K562 (cell line): ENCODE measurements at regions of chr6 and their contacts with region 1.

Region 1: DNA sequence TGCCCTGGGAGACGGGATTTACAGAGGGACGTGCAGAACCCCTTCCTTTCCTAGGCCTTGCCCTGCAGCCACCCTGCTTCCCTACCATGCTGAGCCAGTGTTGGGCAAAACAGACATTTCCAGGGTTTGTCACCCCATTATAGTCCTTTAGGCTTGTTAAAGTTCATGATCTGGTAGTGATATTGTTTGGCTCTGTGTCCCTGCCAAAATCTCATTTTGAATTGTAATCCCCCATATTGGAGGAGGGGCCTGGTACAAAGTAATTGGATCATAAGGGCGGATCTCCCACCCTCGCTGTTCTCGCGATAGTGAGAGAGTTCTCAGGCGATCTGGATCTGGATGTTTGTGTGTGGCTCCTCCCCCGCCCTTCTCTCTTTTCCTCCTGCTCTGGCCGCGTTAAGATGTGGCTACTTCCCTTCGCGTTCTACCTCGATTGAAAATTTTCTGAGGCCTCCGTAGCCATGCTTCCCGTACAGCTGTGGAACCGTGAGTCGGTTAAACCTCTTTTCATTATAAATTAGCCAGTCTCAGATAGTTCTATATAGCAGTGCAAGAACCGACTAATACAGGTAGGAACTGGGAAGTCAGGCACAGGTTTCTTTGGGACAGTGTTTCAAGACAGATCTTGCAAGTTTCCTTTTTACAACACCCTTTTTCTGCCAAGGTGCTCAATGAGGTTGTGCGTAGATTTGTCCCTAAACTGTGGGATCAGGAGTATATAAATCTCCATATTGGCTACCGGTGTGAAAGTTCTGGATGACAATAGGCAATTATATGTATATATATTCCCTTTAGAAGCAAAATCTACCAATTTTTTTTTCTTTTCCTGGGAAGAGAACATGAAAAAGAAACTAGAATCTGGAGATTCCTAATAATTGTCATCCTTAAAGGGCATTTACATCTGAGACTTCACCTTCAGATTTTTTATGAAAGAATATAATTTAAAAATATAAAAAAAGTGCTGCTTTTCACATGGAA is 152.1 kb downstream of the SAMD5 start:
- DNase-seq: peak; percentile 86 to 95 (median 88)
- ATAC-seq: peak; percentile 99
- H3K4me3 ChIP-seq: peak overlapping the region; percentile 63
- H3K27ac ChIP-seq: peak overlapping the region; percentile 80
- H3K4me1 ChIP-seq: peaks cover 4 to 11% of the 10 kb centered on the region in 2 experiments; a peak in 4 of 5 replicates
- H3K27me3 ChIP-seq: no peaks in the 10 kb centered on the region
- CTCF ChIP-seq: peak in 1 of 3 experiments; percentile 22; a peak in 1 of 6 replicates
- EP300 ChIP-seq: no peak
- POLR2A ChIP-seq: peak; percentile 93
- RAD21 ChIP-seq: peak in 1 of 2 experiments; percentile 14; a peak in 1 of 4 replicates

Region 2: DNA sequence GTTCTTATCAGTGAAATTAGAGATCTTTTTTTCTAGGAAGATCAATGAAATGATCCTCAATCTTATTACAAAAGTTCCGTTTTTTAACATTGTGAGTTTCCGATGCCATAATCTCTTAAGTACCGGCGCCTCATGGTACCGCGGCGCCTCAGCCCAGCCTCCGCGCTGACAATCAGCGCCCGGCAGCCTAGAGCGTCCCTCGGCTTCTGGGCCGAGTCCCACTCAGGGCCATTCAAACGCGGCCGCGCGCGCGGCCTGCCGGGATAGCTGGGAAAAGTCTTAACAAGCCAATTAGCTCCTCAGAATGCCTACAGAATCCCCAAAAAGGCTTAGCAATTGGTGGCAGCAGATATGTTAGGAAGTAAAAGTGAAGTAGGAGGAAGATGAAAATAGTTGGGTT is 857.0 kb before region 1 on chr6:
- CTCF ChIA-PET with region 1: no interaction called
- POLR2A ChIA-PET with region 1: no interaction called
- in situ Hi-C with region 1: no loop called
- intact Hi-C with region 1: no loop called
- DNase-seq: peak in 2 of 4 experiments; percentile 57 to 81
- ATAC-seq: peak; percentile 98
- H3K4me3 ChIP-seq: peak overlapping the region; percentile 3; the same call in 1 of the 2 replicates
- H3K27ac ChIP-seq: peak overlapping the region; percentile 62; the same call in 2 of the 3 replicates
- H3K4me1 ChIP-seq: peaks cover 0 to 3% of the 10 kb centered on the region in 2 experiments; a peak in 2 of 5 replicates
- H3K27me3 ChIP-seq: no peaks in the 10 kb centered on the region
- CTCF ChIP-seq: no peak
- EP300 ChIP-seq: no peak
- POLR2A ChIP-seq: peak; percentile 67
- RAD21 ChIP-seq: no peak

Region 3: GRCh38 chr6:147709396-147710272 is 49.0 kb after region 1 on chr6:
- CTCF ChIA-PET with region 1: no interaction called
- POLR2A ChIA-PET with region 1: no interaction called
- in situ Hi-C with region 1: no loop called
- intact Hi-C with region 1: loop called (anchors 5 kb)
- DNase-seq: peak; percentile 45 to 85 (median 62)
- ATAC-seq: peak; percentile 89
- H3K4me3 ChIP-seq: no peak overlapping the region
- H3K27ac ChIP-seq: peak overlapping the region; percentile 59; the same call in 2 of the 3 replicates
- H3K4me1 ChIP-seq: peaks cover 7 to 45% of the 10 kb centered on the region in 2 experiments; a peak in 3 of 5 replicates
- H3K27me3 ChIP-seq: no peaks in the 10 kb centered on the region
- CTCF ChIP-seq: no peak
- EP300 ChIP-seq: peak; percentile 95
- POLR2A ChIP-seq: no peak
- RAD21 ChIP-seq: no peak

Region 4: GRCh38 chr6:149248693-149249363 is 1588.2 kb after region 1 on chr6:
- CTCF ChIA-PET with region 1: no interaction called
- POLR2A ChIA-PET with region 1: no interaction called
- in situ Hi-C with region 1: no loop called
- intact Hi-C with region 1: no loop called
- DNase-seq: peak in 1 of 4 experiments; percentile 34
- ATAC-seq: peak; percentile 69
- H3K4me3 ChIP-seq: no peak overlapping the region
- H3K27ac ChIP-seq: no peak overlapping the region
- H3K4me1 ChIP-seq: peaks cover 0 to 10% of the 10 kb centered on the region in 2 experiments; a peak in 3 of 5 replicates
- H3K27me3 ChIP-seq: peaks cover 7 to 17% of the 10 kb centered on the region in 2 experiments; a peak in 3 of 5 replicates
- CTCF ChIP-seq: no peak
- EP300 ChIP-seq: no peak
- POLR2A ChIP-seq: no peak
- RAD21 ChIP-seq: no peak